ENCODE measurements at regions of chr6 and their contacts with region 1.

Region 1: GRCh38 chr6:107345393-107345792 is 114.0 kb downstream of the PDSS2 start:
- DNase-seq: no peak
- ATAC-seq: no peak
- H3K4me3 ChIP-seq: no peak overlapping the region
- H3K27ac ChIP-seq: no peak overlapping the region
- H3K4me1 ChIP-seq: no peaks in the 10 kb centered on the region
- H3K27me3 ChIP-seq: no peaks in the 10 kb centered on the region
- CTCF ChIP-seq: no peak

Region 2: DNA sequence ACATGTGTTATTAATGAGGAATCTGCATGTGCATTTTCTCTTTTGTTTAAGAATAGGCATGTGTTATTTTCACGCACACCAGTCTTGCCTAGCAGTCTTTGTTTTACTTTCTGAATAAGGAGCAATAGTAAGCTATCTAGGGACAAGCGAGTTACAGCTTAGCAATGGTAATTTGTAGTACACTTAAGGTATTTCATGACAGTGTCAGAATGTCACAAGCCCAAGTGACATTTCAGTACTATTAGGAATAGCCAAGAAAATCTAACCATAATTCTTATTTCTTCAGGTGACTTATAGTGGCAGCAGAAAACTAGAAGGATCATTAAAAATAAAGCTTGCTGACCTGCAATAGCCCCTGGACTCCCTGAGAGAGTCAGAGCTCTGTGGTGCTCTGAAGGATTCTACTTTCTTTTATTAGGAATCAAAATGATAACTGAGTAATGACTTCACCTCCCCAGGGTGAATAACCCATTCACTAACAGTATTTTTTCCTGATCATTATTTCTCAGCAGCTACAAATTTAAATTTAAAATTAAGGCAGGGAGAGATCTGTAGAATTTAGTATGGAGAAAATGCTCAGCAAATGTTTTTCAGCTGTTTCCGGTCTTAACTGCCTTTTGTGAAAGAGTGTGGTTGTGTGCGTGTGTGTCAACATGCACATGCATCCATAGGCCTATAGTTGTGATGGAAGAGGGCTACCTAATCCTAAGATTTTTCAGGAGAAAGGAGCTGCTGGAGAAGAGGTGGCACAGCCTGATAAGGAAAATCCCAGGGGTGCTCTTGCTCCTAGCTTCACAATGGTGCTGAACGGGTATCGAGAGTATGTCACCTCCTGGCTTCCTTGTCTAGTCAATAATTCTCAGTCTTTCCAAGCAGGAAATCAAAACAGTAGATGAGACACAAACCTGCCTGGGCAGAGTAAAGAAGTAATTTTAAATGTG is 140.1 kb before region 1 on chr6:
- CTCF ChIA-PET with region 1: no interaction called
- POLR2A ChIA-PET with region 1: interaction called, 11 read pairs
- intact Hi-C with region 1: no loop called
- DNase-seq: no peak
- ATAC-seq: no peak
- H3K4me3 ChIP-seq: no peak overlapping the region
- H3K27ac ChIP-seq: no peak overlapping the region
- H3K4me1 ChIP-seq: no peaks in the 10 kb centered on the region
- H3K27me3 ChIP-seq: no peaks in the 10 kb centered on the region
- CTCF ChIP-seq: no peak

Measured in PC-3 (cell line).